Activated CD4-positive, alpha-beta T cell treated with anti-CD3 and anti-CD28 coated beads, Interleukin-2, amount 10 ng/mL, durations not matched to agents 7 days and 5 days (primary cell): ENCODE measurements at regions of chr12 and their contacts with region 1.

Region 1: DNA sequence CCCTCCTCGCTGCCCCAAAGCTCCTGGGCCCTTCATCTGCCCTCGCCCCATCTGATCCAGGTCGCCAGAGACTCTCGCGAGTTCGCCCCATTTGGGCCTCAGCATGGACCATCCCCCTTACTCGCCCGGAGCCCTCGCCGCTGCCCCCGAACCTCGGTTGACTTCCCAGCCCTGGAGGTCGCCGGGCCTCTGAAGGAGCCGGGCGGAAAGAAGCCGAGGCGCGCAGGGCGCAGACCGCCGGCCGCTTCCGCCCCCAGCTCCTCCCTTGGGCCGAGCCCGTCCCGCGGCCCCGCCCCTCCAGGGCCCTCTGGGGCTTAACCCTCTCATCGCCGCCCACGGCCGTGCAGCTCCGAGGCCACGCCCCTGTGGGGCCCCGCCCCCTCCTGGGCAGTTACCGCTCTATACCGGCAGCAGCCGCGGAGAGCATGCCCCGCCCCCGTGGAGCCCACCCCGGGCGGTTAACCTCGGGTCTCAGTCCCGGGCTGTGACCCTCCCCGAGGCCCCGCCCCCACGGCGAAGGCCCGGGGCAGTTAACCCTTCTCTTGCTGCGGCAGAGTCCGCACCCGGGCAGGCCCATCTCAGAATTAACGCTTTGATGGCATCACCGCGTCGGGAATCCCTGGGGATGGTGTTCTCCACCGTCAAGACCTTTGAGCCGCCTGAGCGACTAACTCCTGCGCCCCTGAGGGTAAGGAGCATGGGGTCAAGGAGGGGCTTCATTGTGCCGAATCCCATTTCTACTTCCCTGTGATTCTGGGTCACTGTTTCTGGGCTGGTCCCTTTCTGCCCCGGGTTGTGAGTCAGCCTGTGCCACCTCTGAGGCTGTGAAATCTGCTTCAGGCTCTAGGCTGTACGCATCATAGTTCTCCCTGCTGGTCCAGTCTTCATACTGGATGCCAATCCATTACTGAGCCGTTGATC is at the start of gene SPSB2:
- DNase-seq: peak; percentile 99
- H3K4me3 Mint-ChIP-seq: peak within 1 kb of the TSS; percentile 78
- H3K27ac Mint-ChIP-seq: peak within 1 kb of the TSS; percentile 91
- H3K4me1 Mint-ChIP-seq: peaks cover 60% of the 10 kb centered on the region
- H3K27me3 Mint-ChIP-seq: no peaks in the 10 kb centered on the region
- total RNA-seq, gene SPSB2: 15.4 to 17.3 TPM

Region 2: GRCh38 chr12:6818222-6818621 is 55.1 kb before region 1 on chr12:
- CTCF ChIA-PET with region 1: no interaction called
- POLR2A ChIA-PET with region 1: no interaction called
- DNase-seq: no peak
- H3K4me3 Mint-ChIP-seq: no peak overlapping the region
- H3K27ac Mint-ChIP-seq: no peak overlapping the region
- H3K4me1 Mint-ChIP-seq: peaks cover 15% of the 10 kb centered on the region
- H3K27me3 Mint-ChIP-seq: peaks cover 13% of the 10 kb centered on the region

Region 3: GRCh38 chr12:6858799-6859198 is 14.6 kb before region 1 on chr12:
- CTCF ChIA-PET with region 1: interaction called, 67 read pairs
- POLR2A ChIA-PET with region 1: no interaction called
- DNase-seq: no peak
- H3K4me3 Mint-ChIP-seq: no peak overlapping the region
- H3K27ac Mint-ChIP-seq: no peak overlapping the region
- H3K4me1 Mint-ChIP-seq: peaks cover 9% of the 10 kb centered on the region
- H3K27me3 Mint-ChIP-seq: no peaks in the 10 kb centered on the region

Region 4: DNA sequence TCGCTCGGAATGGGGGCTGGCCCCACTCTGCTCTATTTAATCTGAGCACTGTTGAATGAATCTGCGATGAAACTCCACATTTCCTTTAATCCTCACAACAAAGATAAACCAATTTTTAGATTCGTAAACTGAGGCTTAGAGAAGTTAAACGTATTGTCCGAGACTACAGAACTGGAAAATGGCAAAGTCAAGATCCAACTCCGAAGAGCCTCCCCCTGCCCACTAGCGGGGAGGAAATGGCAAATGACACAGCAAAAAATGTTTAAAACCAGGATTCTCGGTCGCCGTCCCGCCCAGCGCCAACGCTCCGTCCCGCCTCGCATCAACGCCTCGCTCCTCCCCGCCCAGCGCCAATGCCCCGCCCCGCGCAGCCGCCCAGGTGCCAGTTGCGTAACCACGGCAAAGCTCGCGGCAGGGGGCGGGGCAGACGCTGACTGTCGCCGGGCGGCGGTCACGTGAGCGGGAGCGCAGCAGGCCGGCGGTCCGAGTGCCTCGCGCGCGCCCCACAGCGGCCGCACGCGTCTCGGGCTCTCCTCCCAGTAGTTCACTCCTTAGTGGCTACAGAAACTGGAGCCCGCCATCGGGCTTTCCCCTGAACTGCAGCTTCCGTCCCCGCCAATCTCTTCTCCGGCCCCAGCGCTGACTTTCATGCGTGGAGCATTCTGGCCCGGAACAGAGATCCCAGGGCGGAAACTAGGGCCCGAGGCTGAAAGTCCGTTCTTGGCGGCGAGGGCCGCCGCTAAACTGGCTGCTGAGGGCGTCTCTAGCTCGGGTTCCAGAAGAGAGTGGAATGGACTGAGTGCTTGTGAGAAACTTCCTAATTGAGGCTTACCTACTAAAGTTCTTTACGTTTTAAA is 17.7 kb after region 1 on chr12:
- CTCF ChIA-PET with region 1: interaction called, 45 read pairs
- POLR2A ChIA-PET with region 1: interaction called, 10 read pairs
- DNase-seq: peak; percentile 98
- H3K4me3 Mint-ChIP-seq: peak overlapping the region; percentile 82
- H3K27ac Mint-ChIP-seq: peak overlapping the region; percentile 96
- H3K4me1 Mint-ChIP-seq: peaks cover 29% of the 10 kb centered on the region
- H3K27me3 Mint-ChIP-seq: no peaks in the 10 kb centered on the region

Region 5: DNA sequence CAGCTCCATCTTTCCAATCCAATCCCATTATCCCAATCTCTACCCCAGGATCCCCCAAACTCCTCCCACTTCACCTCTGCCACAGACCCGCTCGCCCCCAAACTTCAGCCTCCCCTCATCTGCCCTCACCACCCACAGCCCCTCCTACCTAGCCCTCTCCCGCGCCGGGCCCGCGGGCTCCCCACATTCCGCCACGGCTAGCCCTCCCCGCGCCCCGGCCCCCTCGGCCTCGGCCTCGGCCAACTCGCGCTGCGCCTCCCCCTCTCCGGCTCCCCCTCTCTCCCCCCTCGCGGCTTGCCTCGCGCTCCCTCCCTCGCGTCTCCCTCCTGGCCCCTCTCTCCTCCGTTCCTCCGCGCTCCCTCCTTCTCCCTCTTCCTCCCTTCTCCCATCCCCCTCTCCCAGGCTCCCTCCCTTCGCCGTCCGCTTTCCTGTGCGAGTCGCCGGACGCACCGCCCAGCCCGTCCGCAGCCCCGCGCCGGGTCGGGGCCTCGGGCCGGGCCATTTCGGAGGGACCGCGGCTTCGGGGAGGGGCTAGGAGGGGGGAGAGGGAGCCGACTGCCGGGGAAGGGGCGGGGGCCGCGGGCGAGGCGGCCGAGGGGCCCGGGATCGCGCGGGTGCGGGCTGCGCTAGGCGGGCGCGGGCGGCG is 54.1 kb after region 1 on chr12 and contains the start of gene ATN1:
- CTCF ChIA-PET with region 1: interaction called, 23 read pairs
- POLR2A ChIA-PET with region 1: interaction called, 3 read pairs
- DNase-seq: peak; percentile 48
- H3K4me3 Mint-ChIP-seq: peak within 1 kb of the TSS; percentile 84
- H3K27ac Mint-ChIP-seq: peak within 1 kb of the TSS; percentile 91
- H3K4me1 Mint-ChIP-seq: peaks cover 73% of the 10 kb centered on the region
- H3K27me3 Mint-ChIP-seq: no peaks in the 10 kb centered on the region
- total RNA-seq, gene ATN1: 27.3 to 27.6 TPM

Region 6: GRCh38 chr12:6959058-6959804 is 85.9 kb after region 1 on chr12:
- CTCF ChIA-PET with region 1: interaction called, 24 read pairs
- POLR2A ChIA-PET with region 1: no interaction called
- DNase-seq: peak; percentile 80
- H3K4me3 Mint-ChIP-seq: peak overlapping the region; percentile 83
- H3K27ac Mint-ChIP-seq: peak overlapping the region; percentile 93
- H3K4me1 Mint-ChIP-seq: peaks cover 92% of the 10 kb centered on the region
- H3K27me3 Mint-ChIP-seq: no peaks in the 10 kb centered on the region

Region 7: GRCh38 chr12:6998708-6999451 is 125.5 kb after region 1 on chr12:
- CTCF ChIA-PET with region 1: no interaction called
- POLR2A ChIA-PET with region 1: no interaction called
- DNase-seq: no peak
- H3K4me3 Mint-ChIP-seq: no peak overlapping the region
- H3K27ac Mint-ChIP-seq: no peak overlapping the region
- H3K4me1 Mint-ChIP-seq: no peaks in the 10 kb centered on the region
- H3K27me3 Mint-ChIP-seq: no peaks in the 10 kb centered on the region